Activated CD4-positive, alpha-beta T cell treated with anti-CD3 and anti-CD28 coated beads for 36 hours (primary cell): ENCODE measurements at regions of chr9 and their contacts with region 1.

Region 1: DNA sequence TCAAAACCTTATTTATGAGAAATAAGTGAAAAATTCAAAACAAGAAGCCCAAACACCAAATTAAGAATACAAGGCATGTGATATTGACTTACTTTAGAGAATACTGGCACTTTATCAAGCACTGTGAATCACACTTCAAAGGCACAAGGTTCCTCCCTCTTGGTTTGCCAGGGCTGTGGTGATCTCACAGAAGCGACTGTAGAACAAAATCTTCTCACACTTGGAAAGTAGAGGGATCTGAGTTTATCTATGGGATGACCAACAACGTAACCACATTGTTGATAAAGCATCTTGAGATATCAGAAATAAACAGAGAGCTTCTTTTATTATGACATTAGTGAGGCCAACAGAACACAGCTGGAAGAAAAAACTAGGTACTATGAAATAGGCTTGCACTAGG is 295.9 kb downstream of the NFIB start:
- DNase-seq: no peak
- ATAC-seq: no peak
- H3K4me3 Mint-ChIP-seq: no peak overlapping the region
- H3K27ac Mint-ChIP-seq: no peak overlapping the region
- H3K4me1 Mint-ChIP-seq: no peaks in the 10 kb centered on the region
- H3K27me3 Mint-ChIP-seq: no peaks in the 10 kb centered on the region

Region 2: DNA sequence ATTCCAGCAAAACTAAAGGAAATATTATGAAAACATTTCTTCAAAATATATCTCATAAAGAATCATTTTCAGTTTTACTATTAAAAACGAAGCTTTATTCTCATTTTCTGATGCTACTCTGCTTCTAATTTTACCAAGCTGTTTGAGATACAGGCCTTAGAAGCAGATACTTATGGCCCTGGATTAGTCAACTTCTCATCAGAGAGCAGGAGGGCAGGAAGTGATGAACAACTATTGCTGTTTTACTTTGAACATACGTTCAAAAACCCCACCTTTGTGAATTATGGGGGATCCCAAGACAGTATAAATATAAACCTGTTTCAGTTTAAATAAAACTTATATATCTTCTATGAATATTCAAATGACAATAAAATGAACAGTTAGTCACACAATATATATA is 754.6 kb before region 1 on chr9:
- CTCF ChIA-PET with region 1: no interaction called
- POLR2A ChIA-PET with region 1: no interaction called
- intact Hi-C with region 1: no loop called
- DNase-seq: no peak
- ATAC-seq: no peak
- H3K4me3 Mint-ChIP-seq: no peak overlapping the region
- H3K27ac Mint-ChIP-seq: no peak overlapping the region
- H3K4me1 Mint-ChIP-seq: no peaks in the 10 kb centered on the region
- H3K27me3 Mint-ChIP-seq: no peaks in the 10 kb centered on the region

Region 3: GRCh38 chr9:13674926-13675637 is 343.0 kb before region 1 on chr9:
- CTCF ChIA-PET with region 1: no interaction called
- POLR2A ChIA-PET with region 1: no interaction called
- intact Hi-C with region 1: loop called in 1 of 2 experiments (anchors 10 kb)
- DNase-seq: no peak
- ATAC-seq: no peak
- H3K4me3 Mint-ChIP-seq: no peak overlapping the region
- H3K27ac Mint-ChIP-seq: no peak overlapping the region
- H3K4me1 Mint-ChIP-seq: no peaks in the 10 kb centered on the region
- H3K27me3 Mint-ChIP-seq: no peaks in the 10 kb centered on the region

Region 4: GRCh38 chr9:13956107-13956506 is 62.0 kb before region 1 on chr9:
- CTCF ChIA-PET with region 1: no interaction called
- POLR2A ChIA-PET with region 1: no interaction called
- intact Hi-C with region 1: no loop called
- DNase-seq: no peak
- ATAC-seq: no peak
- H3K4me3 Mint-ChIP-seq: no peak overlapping the region
- H3K27ac Mint-ChIP-seq: no peak overlapping the region
- H3K4me1 Mint-ChIP-seq: no peaks in the 10 kb centered on the region
- H3K27me3 Mint-ChIP-seq: no peaks in the 10 kb centered on the region